Spleen (tissue), 13 donors: ENCODE measurements at regions of chr1 and their contacts with region 1.

Region 1: GRCh38 chr1:88655685-88656299 is 28.3 kb upstream of the PKN2 start:
- DNase-seq: no peak
- H3K4me3 ChIP-seq: no peak overlapping the region
- H3K27ac ChIP-seq: no peak overlapping the region
- H3K4me1 ChIP-seq: peaks cover 0 to 9% (median 0%) of the 10 kb centered on the region in 6 donors
- H3K27me3 ChIP-seq: no peaks in the 10 kb centered on the region
- CTCF ChIP-seq: peak in 10 of 11 experiments; percentile 20 to 71 (median 62)
- POLR2A ChIP-seq: no peak

Region 2: GRCh38 chr1:88877382-88877825 is 221.6 kb after region 1 on chr1:
- intact Hi-C with region 1: loop called (anchors 5 kb)
- DNase-seq: no peak
- H3K4me3 ChIP-seq: no peak overlapping the region
- H3K27ac ChIP-seq: no peak overlapping the region
- H3K4me1 ChIP-seq: peaks cover 0 to 89% (median 62%) of the 10 kb centered on the region in 6 donors
- H3K27me3 ChIP-seq: no peaks in the 10 kb centered on the region
- CTCF ChIP-seq: peak in 9 of 11 experiments; percentile 12 to 67 (median 56)
- POLR2A ChIP-seq: no peak